GM10248 (cell line): ENCODE measurements at regions of chr17 and their contacts with region 1.

Region 1: DNA sequence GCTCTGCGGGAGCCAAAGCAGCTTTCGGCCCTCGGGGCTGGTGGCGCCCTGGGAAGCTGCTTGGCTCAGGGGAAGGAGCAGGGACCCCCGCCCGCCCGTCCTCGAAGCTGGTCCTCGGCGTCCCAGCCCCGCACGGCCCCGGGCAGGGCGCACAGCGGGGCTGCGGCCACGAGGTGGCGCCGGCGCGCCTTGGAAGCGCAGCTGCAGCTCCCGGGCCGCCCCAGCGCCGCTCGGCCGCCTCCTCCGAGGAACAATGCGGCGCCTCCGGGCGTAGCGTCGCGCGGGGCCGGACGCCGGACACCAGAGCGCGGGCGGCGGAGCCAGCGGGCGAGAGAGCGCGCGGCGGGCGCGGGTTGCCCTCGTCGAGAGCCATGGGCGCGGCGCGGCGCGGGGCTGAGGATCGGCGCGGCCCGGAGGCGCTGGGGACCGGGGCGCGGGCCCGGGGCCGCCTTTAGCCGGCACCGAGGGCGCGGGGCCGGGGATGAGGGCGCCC is at the start of gene MGAT5B:
- DNase-seq: peak; percentile 93
- CTCF ChIP-seq: peak; percentile 98

Region 2: GRCh38 chr17:76855105-76855504 is 13.1 kb before region 1 on chr17:
- CTCF ChIA-PET with region 1: interaction called, 27 read pairs
- POLR2A ChIA-PET with region 1: no interaction called
- DNase-seq: no peak
- CTCF ChIP-seq: no peak

Region 3: DNA sequence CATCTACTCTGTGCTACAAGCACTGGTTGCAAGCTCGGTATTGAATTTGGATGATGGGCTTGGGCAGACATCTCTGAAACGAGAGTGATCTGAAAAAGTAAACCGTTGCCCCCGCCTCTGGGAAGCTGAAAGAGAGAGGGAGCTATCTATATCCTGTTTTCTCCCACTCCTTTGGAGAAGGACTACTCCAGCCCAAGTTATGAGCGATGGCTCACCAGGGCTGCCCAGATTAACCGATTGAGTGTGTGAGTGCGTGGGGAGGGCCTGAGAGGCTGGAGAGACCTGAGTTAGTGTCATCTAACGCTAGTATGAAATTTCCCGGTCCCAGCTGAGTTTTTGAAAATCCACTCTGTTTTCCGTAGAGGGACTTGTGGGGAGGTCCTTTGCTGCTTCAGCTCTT is 11.5 kb after region 1 on chr17:
- CTCF ChIA-PET with region 1: interaction called, 34 read pairs
- POLR2A ChIA-PET with region 1: no interaction called
- DNase-seq: no peak
- CTCF ChIP-seq: no peak

Region 4: DNA sequence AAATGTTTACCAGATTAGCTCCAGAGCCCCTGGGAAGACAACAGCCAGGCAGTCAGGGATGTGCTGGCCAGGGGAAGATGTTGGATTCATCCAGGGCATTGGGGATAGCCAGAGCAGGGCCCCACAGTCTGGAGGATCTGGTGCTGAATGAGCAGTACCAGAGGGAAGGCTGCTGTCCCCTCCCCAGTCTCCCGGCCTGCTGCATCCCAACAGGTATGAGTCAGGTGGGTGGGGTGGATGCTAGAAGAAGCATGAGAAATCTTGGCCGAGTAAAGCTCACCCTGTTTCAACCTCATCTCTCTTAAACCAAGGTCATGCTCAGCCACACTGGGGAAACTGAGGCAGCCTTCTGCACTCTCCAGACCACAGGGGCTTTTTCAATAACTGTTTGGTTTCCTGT is 200.7 kb after region 1 on chr17:
- CTCF ChIA-PET with region 1: interaction called, 68 read pairs
- POLR2A ChIA-PET with region 1: no interaction called
- DNase-seq: no peak
- CTCF ChIP-seq: no peak